HEK293 (cell line): ENCODE measurements at regions of chr16 and their contacts with region 1.

Region 1: DNA sequence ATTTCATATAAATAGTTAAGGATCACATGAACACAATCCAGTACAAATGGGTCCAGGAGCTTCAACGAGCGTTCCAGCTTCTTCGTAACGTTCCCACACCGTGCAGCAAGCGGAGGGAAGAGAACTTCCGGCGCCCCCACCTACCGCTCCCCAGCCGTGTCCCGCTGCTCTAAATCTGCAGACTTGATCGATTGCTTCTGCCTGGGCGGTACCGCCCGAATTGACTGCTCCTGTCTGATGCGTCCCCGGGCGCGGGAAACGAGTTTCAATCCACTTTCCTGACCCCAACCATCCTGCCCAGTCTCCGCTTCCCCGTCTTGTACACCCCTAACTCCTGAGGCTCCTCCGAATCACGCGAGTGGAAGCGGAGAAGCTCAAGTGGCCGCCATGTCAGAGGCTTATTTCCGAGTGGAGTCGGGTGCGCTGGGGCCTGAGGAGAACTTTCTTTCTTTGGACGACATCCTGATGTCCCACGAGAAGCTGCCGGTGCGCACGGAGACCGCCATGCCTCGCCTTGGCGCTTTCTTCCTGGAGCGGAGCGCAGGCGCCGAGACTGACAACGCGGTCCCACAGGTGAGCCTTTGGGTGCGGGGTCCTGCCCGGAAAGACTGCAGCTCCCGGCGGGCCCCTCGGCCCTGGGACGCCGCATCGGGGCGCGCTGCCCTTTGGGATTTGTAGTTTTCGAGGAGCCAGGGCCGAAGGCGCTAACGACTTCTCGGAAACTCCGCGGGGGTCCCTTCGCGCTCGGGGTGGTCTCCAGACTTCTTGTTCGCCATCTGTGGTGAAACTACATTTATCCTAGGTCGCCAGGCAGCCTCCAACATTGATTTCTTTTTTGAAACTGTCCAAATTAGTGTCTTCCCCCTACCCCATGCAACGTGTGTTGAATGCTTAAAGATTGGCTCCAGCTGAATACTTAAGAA is at the start of gene GINS3:
- H3K4me3 ChIP-seq: peak within 1 kb of the TSS; percentile 94
- H3K27ac ChIP-seq: peak within 1 kb of the TSS; percentile 87
- H3K4me1 ChIP-seq: peaks cover 8% of the 10 kb centered on the region; the same call in 1 of the 2 replicates
- CTCF ChIP-seq: 0 out of 2 replicates have a peak, but pooled peaks have one; percentile 21

Region 2: DNA sequence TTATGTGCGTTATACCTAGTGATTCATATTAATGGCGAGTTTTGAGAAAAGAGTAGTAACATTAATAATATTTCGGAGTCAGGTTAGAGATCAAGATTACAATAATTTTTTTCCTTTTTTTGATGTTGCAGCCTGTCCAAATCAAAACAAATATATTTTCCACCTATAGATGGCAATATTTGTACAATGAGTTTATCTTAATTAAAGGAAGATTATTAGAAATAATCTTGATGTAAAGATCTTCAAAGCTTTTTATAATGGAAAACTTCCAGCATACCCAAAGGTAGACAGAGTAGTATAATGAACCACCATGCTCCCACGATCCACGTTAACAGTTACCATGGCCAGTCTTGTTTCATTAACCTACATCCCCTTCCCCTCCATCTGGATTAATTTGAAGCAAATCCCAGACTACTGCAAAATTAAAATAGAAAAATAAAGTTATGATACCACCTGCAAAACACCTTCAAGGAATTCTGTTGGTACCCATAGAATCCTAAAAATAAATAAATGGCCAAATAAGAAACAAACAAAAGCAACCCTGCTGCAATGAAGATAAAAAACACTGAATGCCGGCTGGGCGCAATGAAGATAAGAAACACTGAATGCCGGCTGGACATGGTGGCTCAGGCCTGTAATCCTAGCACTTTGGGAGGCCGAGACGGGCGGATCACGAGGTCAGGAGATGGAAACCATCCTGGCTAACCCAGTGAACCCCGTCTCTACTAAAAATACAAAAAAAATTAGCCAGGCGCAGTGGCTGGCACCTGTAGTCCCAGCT is 46.7 kb before region 1 on chr16:
- CTCF ChIA-PET with region 1: interaction called, 4 read pairs
- POLR2A ChIA-PET with region 1: interaction called, 11 read pairs
- H3K4me3 ChIP-seq: no peak overlapping the region
- H3K27ac ChIP-seq: no peak overlapping the region
- H3K4me1 ChIP-seq: no peaks in the 10 kb centered on the region
- CTCF ChIP-seq: no peak